H1 (cell line): ENCODE measurements at regions of chr4 and their contacts with region 1.

Region 1: GRCh38 chr4:139619644-139620043 is 46.0 kb upstream of the MGST2 start:
- DNase-seq: no peak
- H3K4me3 ChIP-seq: no peak overlapping the region
- H3K27ac ChIP-seq: no peak overlapping the region
- H3K4me1 ChIP-seq: peaks cover under 1% of the 10 kb centered on the region in 4 experiments; a peak in 5 of 7 replicates
- H3K27me3 ChIP-seq: peaks cover 22 to 35% (median 27%) of the 10 kb centered on the region in 4 experiments
- CTCF ChIP-seq: peak in 2 of 3 experiments; percentile 67 to 71; a peak in 3 of 4 replicates
- EP300 ChIP-seq: no peak
- POLR2A ChIP-seq: no peak
- RAD21 ChIP-seq: peak; percentile 38 to 58; a peak in 3 of 4 replicates

Region 2: DNA sequence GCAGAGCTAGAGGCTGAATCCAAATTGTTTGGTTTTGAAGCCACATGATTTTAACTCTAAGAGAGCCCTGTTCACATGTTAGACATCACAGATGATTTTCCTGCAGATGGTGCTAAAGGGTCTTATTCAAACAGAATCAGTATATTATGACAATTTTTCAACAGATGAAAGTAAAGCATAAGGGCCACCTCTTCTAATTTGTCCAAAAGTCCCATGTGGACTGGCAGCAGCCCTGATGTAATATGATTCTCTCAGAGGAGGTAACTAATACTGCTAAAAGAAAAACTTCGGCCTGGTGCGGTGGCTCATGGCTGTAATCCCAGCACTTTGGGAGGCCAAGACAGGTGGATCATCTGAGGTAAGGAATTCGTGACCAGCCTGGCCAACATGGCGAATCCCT is 37.6 kb before region 1 on chr4:
- CTCF ChIA-PET with region 1: interaction called, 17 read pairs
- POLR2A ChIA-PET with region 1: no interaction called
- DNase-seq: no peak
- H3K4me3 ChIP-seq: no peak overlapping the region
- H3K27ac ChIP-seq: no peak overlapping the region
- H3K4me1 ChIP-seq: peaks cover 0 to 4% (median 0%) of the 10 kb centered on the region in 4 experiments; a peak in 2 of 7 replicates
- H3K27me3 ChIP-seq: peaks cover 1 to 9% (median 6%) of the 10 kb centered on the region in 4 experiments; a peak in 6 of 7 replicates
- CTCF ChIP-seq: no peak
- EP300 ChIP-seq: no peak
- POLR2A ChIP-seq: no peak
- RAD21 ChIP-seq: no peak

Region 3: DNA sequence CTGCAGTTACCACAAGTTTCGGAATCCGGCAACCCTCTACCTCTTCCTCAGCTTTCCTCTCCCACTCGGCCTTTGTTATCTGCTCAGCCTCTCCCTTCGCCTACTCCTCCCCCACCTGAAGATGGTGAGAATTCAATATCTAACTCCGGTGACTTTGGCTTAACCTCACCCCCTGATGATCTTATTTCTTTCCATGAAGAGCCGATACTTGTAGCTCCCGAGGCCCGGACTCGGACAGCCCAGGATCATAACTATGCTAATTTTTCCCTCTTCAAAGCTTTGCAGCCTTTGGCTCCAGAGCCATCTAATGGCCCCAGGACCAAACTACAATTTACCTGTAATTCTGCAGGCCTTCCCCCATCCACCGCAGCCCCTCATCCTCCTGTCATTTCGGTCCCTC is 14.0 kb after region 1 on chr4:
- CTCF ChIA-PET with region 1: interaction called, 65 read pairs
- POLR2A ChIA-PET with region 1: interaction called, 5 read pairs
- DNase-seq: peak in 1 of 2 experiments; percentile 63
- H3K4me3 ChIP-seq: peak overlapping the region in 2 of 4 experiments; percentile 23 to 45; a peak in 3 of 8 replicates
- H3K27ac ChIP-seq: no peak overlapping the region
- H3K4me1 ChIP-seq: peaks cover 0 to 5% (median under 1%) of the 10 kb centered on the region in 4 experiments; a peak in 3 of 7 replicates
- H3K27me3 ChIP-seq: peaks cover 4 to 27% (median 15%) of the 10 kb centered on the region in 4 experiments
- CTCF ChIP-seq: peak; percentile 40 to 68 (median 62)
- EP300 ChIP-seq: no peak
- POLR2A ChIP-seq: no peak
- RAD21 ChIP-seq: peak; percentile 83

Region 4: GRCh38 chr4:139642364-139642763 is 22.7 kb after region 1 on chr4:
- CTCF ChIA-PET with region 1: interaction called, 24 read pairs
- POLR2A ChIA-PET with region 1: no interaction called
- DNase-seq: no peak
- H3K4me3 ChIP-seq: no peak overlapping the region
- H3K27ac ChIP-seq: no peak overlapping the region
- H3K4me1 ChIP-seq: no peaks in the 10 kb centered on the region
- H3K27me3 ChIP-seq: no peaks in the 10 kb centered on the region; a peak in 1 of 7 replicates
- CTCF ChIP-seq: no peak
- EP300 ChIP-seq: no peak
- POLR2A ChIP-seq: no peak
- RAD21 ChIP-seq: no peak

Region 5: DNA sequence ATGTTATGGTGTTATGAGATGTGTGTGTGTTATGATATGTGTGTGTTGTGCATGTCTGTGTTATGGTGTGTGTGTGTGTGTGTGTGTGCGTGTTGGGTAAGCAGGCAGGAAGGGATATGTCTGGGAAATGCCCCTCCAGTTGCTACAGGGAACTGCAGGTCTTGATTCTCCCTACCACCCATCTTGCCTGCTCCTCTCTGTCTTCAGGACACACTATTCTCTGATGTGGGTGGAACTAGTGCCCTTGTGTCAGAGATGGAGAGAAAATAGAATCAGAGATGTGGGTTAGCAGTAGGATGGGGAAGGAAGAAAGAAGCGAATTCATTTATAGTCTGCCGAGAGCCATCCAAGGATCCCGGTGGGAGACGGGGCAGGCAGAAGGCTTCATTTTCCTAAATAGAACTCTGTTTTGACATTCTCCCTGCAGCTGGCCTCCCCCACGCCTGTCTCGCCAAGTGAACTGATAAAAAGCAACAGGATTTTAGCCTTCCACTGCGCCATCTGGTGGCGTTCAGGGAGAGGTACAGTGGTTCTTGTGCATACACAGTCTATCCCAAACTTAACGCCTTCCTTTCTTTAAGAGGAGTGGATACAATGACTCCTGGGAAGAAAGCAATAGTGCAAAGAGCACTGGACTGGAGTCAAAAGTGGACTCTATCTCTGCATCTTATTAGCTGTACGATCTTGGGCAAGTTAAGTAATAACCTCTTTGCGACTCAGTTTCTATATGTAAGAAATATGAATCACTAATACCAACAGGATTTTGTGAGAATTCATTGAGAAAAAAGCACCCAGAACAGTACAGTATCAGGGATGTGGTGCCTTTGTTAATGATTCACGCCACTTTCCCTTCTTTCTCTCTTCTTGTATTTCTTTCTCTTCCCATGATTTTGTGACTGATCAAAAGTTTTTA is 31.9 kb after region 1 on chr4:
- CTCF ChIA-PET with region 1: interaction called, 264 read pairs
- POLR2A ChIA-PET with region 1: no interaction called
- DNase-seq: peak in 1 of 2 experiments; percentile 79
- H3K4me3 ChIP-seq: no peak overlapping the region
- H3K27ac ChIP-seq: no peak overlapping the region
- H3K4me1 ChIP-seq: no peaks in the 10 kb centered on the region; a peak in 1 of 7 replicates
- H3K27me3 ChIP-seq: no peaks in the 10 kb centered on the region; a peak in 1 of 7 replicates
- CTCF ChIP-seq: peak; percentile 64 to 92 (median 91)
- EP300 ChIP-seq: no peak
- POLR2A ChIP-seq: no peak
- RAD21 ChIP-seq: peak; percentile 77 to 82

Region 6: DNA sequence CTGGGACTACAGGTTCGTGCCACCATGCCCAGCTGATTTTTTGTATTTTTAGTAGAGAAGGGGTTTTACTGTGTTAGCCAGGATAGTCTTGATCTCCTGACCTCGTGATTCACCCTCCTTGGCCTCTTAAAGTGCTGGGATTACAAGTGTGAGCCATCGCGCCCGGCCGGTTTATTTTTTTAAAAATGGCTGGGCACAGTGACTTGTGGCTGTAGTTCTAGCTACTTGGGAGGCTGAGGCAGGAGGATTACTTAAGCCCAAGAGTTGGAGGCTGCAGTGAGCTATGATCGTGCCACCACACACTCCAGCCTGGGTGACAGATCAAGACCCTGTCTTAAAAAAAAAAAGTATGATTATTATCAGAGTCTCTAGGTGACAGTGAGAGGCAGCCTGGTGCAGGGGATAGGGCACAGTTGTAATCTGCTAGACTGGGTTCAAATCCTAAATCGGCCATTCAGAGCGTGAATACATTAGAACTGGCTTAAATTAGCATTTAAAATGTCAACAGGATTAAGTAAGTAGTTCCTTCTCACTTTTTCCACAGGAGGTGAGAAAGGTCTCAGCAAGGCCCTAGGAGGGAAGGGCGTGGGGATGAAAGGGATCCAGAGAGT is 45.5 kb after region 1 on chr4:
- CTCF ChIA-PET with region 1: interaction called, 264 read pairs
- POLR2A ChIA-PET with region 1: no interaction called
- DNase-seq: no peak
- H3K4me3 ChIP-seq: peak overlapping the region; percentile 35 to 65 (median 44); a peak in 7 of 8 replicates
- H3K27ac ChIP-seq: no peak overlapping the region; the same call in 1 of the 2 replicates
- H3K4me1 ChIP-seq: peaks cover 0 to 3% (median 0%) of the 10 kb centered on the region in 4 experiments; a peak in 3 of 7 replicates
- H3K27me3 ChIP-seq: no peaks in the 10 kb centered on the region; a peak in 1 of 7 replicates
- CTCF ChIP-seq: no peak
- EP300 ChIP-seq: no peak
- POLR2A ChIP-seq: no peak
- RAD21 ChIP-seq: no peak